K562 (cell line): ENCODE measurements at regions of chr7 and their contacts with region 1.

Region 1: DNA sequence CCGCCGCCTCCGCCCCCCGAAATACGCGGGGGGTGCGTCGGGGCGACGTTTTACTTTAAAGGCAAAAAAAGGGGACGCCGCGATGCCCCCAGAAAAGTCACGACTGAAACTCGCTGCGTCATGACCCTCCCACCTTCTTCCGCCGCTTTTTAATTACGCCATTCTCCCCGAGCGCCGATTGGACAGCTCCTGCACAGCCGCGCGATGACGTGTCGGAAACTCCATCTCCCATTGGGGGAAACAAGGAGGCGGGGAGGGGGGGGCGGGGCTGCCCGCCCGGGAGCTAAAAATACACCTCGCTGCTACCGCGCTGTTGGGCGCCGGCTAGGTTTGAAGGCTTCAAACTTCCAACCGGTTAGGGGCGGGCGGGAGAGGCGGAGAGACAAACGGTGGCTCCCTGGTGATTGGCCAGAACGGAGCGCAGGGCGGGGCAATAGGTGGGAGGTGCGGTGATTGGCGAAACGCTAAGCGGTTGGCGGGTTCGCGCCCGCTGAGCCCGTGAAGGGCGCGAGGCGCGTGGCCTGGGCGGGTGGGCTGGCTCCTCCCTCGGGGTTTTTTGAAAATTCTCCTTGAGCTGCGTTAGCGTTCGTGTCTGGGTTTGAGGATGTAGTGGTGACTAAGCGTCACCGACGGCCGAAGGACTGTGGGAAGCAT is at the start of gene RHEB:
- DNase-seq: peak; percentile 97 to 100 (median 98)
- ATAC-seq: peak; percentile 92
- H3K4me3 ChIP-seq: peak within 1 kb of the TSS; percentile 69
- H3K27ac ChIP-seq: peak within 1 kb of the TSS; percentile 89
- H3K4me1 ChIP-seq: peaks cover 25 to 28% of the 10 kb centered on the region in 2 experiments; a peak in 4 of 5 replicates
- H3K27me3 ChIP-seq: peaks cover 3 to 4% of the 10 kb centered on the region in 2 experiments; a peak in 2 of 5 replicates
- CTCF ChIP-seq: no peak
- EP300 ChIP-seq: peak; percentile 21; the same call in 1 of the 2 replicates
- POLR2A ChIP-seq: peak; percentile 61; the same call in 1 of the 2 replicates
- RAD21 ChIP-seq: no peak
- polyA plus RNA-seq, gene RHEB: 28.5 to 35.3 TPM

Region 2: GRCh38 chr7:151503902-151504714 is 15.8 kb before region 1 on chr7:
- CTCF ChIA-PET with region 1: no interaction called
- POLR2A ChIA-PET with region 1: interaction called, 71 read pairs
- in situ Hi-C with region 1: no loop called
- intact Hi-C with region 1: no loop called
- DNase-seq: no peak
- ATAC-seq: no peak
- H3K4me3 ChIP-seq: no peak overlapping the region
- H3K27ac ChIP-seq: no peak overlapping the region
- H3K4me1 ChIP-seq: peaks cover 10 to 17% of the 10 kb centered on the region in 2 experiments; a peak in 4 of 5 replicates
- H3K27me3 ChIP-seq: no peaks in the 10 kb centered on the region
- CTCF ChIP-seq: no peak
- EP300 ChIP-seq: no peak
- POLR2A ChIP-seq: 0 out of 2 replicates have a peak, but pooled peaks have one; percentile 1
- RAD21 ChIP-seq: no peak

Region 3: DNA sequence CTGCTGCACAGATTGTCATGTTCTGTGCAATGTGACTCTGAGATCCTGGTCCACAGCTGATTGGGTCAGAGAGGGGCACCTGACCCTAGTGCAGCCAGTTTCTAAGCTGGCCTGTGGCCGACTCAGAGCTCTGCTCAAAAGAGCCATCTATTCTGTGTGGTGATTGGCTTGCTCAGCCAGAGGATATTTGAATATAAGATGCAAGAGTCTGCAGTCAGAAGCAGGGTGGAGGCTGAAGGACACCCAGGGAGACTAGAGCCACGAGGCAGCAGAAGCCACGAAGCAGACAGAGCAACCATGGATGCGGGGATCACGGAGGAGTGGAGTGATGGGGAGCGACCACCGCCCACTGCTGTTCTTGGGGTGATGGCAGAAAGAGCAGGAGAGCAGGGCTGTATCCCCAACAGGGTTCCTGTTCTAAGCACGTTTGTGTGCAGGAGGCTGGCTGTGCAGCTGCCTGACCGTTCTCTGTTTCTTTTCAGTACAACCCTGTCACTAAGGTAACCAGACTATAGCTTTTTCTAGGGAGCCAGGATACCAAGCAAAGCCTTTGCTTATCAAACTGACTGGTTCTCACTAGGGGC is 19.3 kb after region 1 on chr7:
- CTCF ChIA-PET with region 1: no interaction called
- POLR2A ChIA-PET with region 1: interaction called, 13 read pairs
- in situ Hi-C with region 1: no loop called
- intact Hi-C with region 1: no loop called
- DNase-seq: no peak
- ATAC-seq: peak; percentile 73
- H3K4me3 ChIP-seq: no peak overlapping the region
- H3K27ac ChIP-seq: no peak overlapping the region
- H3K4me1 ChIP-seq: no peaks in the 10 kb centered on the region
- H3K27me3 ChIP-seq: peaks cover 59 to 60% of the 10 kb centered on the region in 2 experiments
- CTCF ChIP-seq: no peak
- EP300 ChIP-seq: no peak
- POLR2A ChIP-seq: no peak
- RAD21 ChIP-seq: no peak

Region 4: DNA sequence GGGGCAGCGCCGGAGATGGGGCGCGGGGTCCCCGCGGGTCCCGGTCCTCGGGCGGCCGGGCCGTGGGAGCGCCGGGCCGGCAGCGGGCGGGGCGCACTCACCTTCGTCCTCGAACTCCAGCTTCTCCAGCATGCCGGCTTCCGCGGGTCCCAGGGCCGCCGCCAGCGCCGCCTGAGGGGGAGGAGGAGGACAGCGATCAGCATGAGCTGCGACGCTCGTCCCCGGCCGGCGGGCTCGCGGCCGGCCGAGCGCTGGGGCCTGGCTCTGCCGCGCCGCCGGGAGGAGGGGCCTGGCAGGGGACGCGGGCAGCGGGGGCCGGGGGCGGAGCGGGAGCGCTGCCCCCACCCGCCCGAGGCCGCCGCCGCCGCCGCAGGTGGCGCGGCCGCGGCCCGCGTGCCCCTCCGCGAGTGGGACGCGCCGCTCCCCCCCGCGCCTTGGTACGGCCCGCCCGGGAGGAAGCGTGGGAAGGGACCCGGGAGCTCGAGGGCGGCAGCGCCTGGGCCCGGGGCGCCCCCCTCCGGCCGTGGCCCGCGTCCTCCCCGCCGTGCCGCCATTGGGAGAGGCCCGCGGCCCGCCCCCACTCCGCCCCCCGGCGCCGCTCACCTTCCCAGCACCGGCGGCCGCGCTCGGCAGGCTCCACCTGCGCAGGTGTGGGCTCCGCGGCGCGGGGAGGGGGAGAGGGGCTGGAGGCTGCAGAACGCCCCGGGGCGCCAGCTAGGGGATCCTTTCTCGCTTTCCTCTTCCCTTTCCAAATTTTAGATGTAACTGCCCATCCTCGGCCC is 112.3 kb after region 1 on chr7:
- CTCF ChIA-PET with region 1: interaction called, 5 read pairs
- POLR2A ChIA-PET with region 1: no interaction called
- in situ Hi-C with region 1: no loop called
- intact Hi-C with region 1: loop called (anchors 5 kb)
- DNase-seq: peak; percentile 89 to 99 (median 96)
- ATAC-seq: peak; percentile 96
- H3K4me3 ChIP-seq: peak overlapping the region; percentile 54
- H3K27ac ChIP-seq: no peak overlapping the region
- H3K4me1 ChIP-seq: peaks cover 6 to 15% of the 10 kb centered on the region in 2 experiments; a peak in 3 of 5 replicates
- H3K27me3 ChIP-seq: peaks cover 28 to 33% of the 10 kb centered on the region in 2 experiments
- CTCF ChIP-seq: peak; percentile 13 to 74 (median 58); a peak in 4 of 6 replicates
- EP300 ChIP-seq: no peak
- POLR2A ChIP-seq: no peak
- RAD21 ChIP-seq: peak in 1 of 2 experiments; percentile 39; a peak in 3 of 4 replicates

Region 5: DNA sequence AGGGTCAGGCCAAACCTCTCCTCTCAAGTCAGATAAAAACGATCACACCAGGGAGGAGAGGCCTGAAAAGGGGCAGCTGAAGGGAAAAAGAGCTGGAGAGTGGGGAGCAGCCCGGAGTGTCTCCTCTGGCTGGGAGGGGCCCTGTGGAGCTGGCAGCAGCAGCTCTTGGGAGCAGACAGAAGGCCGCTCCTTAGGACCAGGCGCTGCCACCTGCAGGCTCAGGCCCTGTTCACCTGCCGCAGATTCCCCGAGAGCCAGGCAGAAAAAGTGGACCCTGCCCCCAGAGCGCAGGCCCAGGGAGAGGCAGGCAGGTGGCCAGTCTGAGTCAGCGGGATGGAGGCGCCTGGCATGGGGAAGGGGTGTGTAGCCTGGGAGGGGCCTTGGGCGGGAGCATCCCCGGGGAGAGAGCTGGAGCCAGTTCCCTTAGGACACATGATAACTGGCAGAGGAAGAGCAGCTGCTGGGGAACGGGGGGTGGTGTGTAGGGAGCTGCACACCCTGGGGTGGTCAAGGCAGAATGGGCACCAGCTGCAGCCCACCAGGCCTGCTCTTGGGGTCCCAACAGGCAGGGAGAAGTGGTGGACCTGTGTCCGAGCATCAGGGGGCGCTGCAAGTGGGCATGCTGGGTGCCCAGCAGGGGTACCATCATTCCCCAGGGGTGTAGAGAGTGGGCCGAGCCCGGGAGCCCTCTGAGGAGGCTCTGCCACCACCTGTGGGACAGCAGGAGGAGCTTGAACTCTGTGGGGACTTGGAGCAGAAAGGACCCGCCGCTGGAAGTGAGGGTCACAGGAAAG is 177.0 kb after region 1 on chr7:
- CTCF ChIA-PET with region 1: no interaction called
- POLR2A ChIA-PET with region 1: no interaction called
- in situ Hi-C with region 1: no loop called
- intact Hi-C with region 1: no loop called
- DNase-seq: no peak
- ATAC-seq: no peak
- H3K4me3 ChIP-seq: no peak overlapping the region
- H3K27ac ChIP-seq: no peak overlapping the region
- H3K4me1 ChIP-seq: no peaks in the 10 kb centered on the region
- H3K27me3 ChIP-seq: peaks cover 52 to 95% of the 10 kb centered on the region in 2 experiments
- CTCF ChIP-seq: no peak
- EP300 ChIP-seq: no peak
- POLR2A ChIP-seq: no peak
- RAD21 ChIP-seq: no peak